Activated CD4-positive, alpha-beta T cell treated with anti-CD3 and anti-CD28 coated beads for 36 hours (primary cell): ENCODE measurements at regions of chr2 and their contacts with region 1.

Region 1: DNA sequence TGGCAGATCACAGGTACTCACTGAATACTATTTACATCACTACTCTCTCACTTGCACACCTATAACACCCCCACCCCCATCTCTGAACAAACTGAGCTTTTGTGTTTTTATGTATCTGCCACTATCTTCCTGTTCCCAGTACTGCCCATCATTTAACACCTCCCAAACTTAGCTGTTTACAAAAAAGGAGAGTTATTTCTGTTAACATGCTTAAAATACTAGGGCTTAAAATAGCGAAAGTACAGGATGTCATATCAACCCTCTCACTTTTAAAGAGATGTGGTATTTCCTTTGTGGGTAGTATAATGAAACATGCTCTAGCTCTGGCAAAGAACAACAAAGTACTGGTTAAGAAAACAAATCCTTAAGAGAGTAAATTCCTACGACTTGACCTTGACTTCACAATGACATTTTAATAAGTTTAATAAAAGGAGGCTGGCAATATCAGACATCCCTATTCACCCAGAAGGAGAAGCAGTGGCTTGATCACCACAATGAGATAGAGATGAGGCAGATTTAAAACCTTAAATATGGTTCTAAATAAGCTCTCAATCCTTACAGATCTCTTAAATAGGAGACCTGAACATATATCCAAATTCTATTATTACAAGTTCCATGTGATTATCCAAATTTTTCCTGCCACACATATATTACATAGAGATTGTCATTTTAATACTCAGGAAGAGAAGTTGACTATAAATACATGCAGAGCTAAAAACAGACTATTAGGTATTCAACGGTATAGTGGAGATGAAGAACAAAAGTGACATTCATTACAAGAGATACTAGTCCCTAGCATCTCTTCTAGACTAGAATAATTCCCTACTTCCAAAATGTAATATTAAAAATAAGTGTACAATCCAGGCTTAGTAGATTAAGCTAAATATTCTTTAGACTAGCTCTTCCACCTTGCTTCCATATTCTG is 36.9 kb downstream of the TRAK2 start:
- DNase-seq: no peak
- ATAC-seq: peak; percentile 82
- H3K4me3 Mint-ChIP-seq: no peak overlapping the region
- H3K27ac Mint-ChIP-seq: no peak overlapping the region
- H3K4me1 Mint-ChIP-seq: peaks cover 20% of the 10 kb centered on the region
- H3K27me3 Mint-ChIP-seq: no peaks in the 10 kb centered on the region

Region 2: GRCh38 chr2:201021914-201022313 is 392.4 kb before region 1 on chr2:
- CTCF ChIA-PET with region 1: no interaction called
- POLR2A ChIA-PET with region 1: no interaction called
- intact Hi-C with region 1: no loop called
- DNase-seq: no peak
- ATAC-seq: peak; percentile 60
- H3K4me3 Mint-ChIP-seq: no peak overlapping the region
- H3K27ac Mint-ChIP-seq: no peak overlapping the region
- H3K4me1 Mint-ChIP-seq: peaks cover 18% of the 10 kb centered on the region
- H3K27me3 Mint-ChIP-seq: no peaks in the 10 kb centered on the region

Region 3: GRCh38 chr2:201378496-201379397 is 35.6 kb before region 1 on chr2:
- CTCF ChIA-PET with region 1: no interaction called
- POLR2A ChIA-PET with region 1: no interaction called
- intact Hi-C with region 1: no loop called
- DNase-seq: no peak
- ATAC-seq: no peak
- H3K4me3 Mint-ChIP-seq: no peak overlapping the region
- H3K27ac Mint-ChIP-seq: no peak overlapping the region
- H3K4me1 Mint-ChIP-seq: no peaks in the 10 kb centered on the region
- H3K27me3 Mint-ChIP-seq: no peaks in the 10 kb centered on the region

Region 4: DNA sequence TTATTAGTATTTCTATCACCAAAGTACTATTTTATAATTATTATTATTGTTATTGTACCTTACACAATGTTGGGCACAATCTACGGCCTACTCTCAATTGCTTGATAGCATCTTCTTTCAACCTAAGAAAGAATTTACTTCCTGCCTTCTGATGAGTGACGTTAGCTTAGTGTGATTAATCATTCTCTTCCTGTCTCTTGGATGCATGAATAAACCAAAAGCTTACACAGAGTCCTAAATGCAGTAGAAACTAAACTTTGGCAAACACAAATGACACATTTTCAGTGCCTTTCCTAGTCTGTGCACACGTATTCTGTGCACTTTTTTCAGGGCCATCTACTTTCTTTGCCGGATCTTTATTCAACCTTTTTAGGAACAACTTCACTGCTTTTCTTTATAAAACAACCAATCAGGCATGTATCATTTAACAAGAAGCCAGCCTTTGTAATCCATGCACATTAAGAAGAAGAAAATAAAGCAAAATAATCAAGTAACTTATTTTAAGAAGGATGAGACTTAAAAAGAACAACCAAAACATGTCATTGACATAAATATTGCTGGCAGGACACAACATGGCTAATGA is 17.8 kb after region 1 on chr2:
- CTCF ChIA-PET with region 1: interaction called, 5 read pairs
- POLR2A ChIA-PET with region 1: no interaction called
- intact Hi-C with region 1: loop called in 1 of 2 experiments (anchors 2 kb)
- DNase-seq: no peak
- ATAC-seq: peak; percentile 99
- H3K4me3 Mint-ChIP-seq: peak overlapping the region; percentile 45
- H3K27ac Mint-ChIP-seq: peak overlapping the region; percentile 95
- H3K4me1 Mint-ChIP-seq: peaks cover 49% of the 10 kb centered on the region
- H3K27me3 Mint-ChIP-seq: no peaks in the 10 kb centered on the region

Region 5: DNA sequence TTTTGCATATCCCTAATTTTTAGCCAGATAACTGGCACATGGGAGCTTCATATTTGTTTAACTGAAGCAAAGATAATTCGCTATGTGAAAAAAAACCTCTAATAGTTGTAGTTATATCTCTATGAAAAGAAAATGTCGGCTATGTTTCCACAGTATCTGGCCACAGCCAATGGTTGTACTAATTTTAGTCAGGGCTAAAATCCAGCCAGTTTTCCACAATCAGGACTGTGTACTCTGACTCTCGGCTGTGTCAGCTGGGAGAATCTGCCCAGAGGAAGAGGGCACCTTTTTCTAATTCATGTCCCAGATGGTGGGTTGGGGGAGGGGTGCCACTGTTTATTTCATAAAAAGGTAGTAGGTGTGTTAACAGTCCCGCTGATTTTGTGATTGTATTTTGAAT is 75.9 kb after region 1 on chr2:
- CTCF ChIA-PET with region 1: no interaction called
- POLR2A ChIA-PET with region 1: no interaction called
- intact Hi-C with region 1: no loop called
- DNase-seq: no peak
- ATAC-seq: no peak
- H3K4me3 Mint-ChIP-seq: no peak overlapping the region
- H3K27ac Mint-ChIP-seq: no peak overlapping the region
- H3K4me1 Mint-ChIP-seq: no peaks in the 10 kb centered on the region
- H3K27me3 Mint-ChIP-seq: no peaks in the 10 kb centered on the region